MCF 10A (cell line): ENCODE measurements at regions of chr7 and their contacts with region 1.

Region 1: DNA sequence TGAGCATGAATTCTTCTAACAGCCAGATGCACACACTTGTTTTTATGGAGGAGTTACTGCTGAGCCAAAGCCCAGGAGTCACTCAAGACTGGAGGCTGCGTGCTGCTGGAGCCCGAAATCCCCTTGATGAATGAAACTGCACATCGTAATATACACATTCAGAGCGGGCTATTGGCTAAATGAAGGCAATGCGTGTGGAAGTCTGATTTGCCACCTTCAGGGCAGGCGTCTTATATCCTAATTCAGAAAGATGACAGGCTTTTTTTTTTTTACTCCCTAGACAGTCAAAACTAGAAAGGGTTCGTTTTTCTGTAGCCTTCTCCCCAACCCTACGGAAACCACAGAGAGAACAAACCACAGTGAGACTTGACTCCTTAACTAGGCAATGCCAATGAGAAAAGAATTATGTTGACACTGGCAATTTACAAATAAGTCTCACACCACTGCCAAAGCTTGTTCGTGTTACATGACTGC is 227.2 kb upstream of the KLF14 start:
- DNase-seq: peak; percentile 91
- H3K4me3 Mint-ChIP-seq: peak overlapping the region; percentile 76
- H3K27ac Mint-ChIP-seq: peak overlapping the region; percentile 94
- H3K4me1 Mint-ChIP-seq: peaks cover 48% of the 10 kb centered on the region
- H3K27me3 Mint-ChIP-seq: no peaks in the 10 kb centered on the region
- CTCF ChIP-seq: no peak

Region 2: DNA sequence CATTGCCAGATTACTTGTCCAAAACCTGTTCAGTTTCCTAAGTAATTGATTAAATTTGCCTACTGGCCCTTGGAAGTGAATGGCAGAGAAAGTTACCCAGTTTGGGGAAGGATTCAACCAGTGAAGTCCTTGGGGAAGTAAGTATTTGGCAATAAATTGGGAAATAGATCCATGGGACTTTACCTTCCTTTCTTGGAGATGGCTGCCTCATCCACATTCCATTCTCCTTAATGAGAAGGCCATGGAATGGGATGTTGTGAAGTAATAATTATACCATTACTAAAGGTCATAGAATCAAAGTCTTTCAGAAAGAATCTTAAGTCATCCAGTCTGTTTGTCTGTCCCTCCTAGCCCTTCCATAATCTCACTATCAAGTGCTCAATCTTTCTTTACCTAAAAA is 288.1 kb before region 1 on chr7:
- CTCF ChIA-PET with region 1: no interaction called
- POLR2A ChIA-PET with region 1: no interaction called
- intact Hi-C with region 1: no loop called
- DNase-seq: peak; percentile 10
- H3K4me3 Mint-ChIP-seq: no peak overlapping the region
- H3K27ac Mint-ChIP-seq: no peak overlapping the region
- H3K4me1 Mint-ChIP-seq: peaks cover 9% of the 10 kb centered on the region
- H3K27me3 Mint-ChIP-seq: no peaks in the 10 kb centered on the region
- CTCF ChIP-seq: no peak

Region 3: GRCh38 chr7:130891254-130892094 is 69.7 kb before region 1 on chr7:
- CTCF ChIA-PET with region 1: interaction called, 51 read pairs
- POLR2A ChIA-PET with region 1: interaction called, 93 read pairs
- intact Hi-C with region 1: no loop called
- DNase-seq: peak; percentile 97
- H3K4me3 Mint-ChIP-seq: peak overlapping the region; percentile 69
- H3K27ac Mint-ChIP-seq: peak overlapping the region; percentile 95
- H3K4me1 Mint-ChIP-seq: peaks cover 78% of the 10 kb centered on the region
- H3K27me3 Mint-ChIP-seq: no peaks in the 10 kb centered on the region
- CTCF ChIP-seq: no peak

Region 4: DNA sequence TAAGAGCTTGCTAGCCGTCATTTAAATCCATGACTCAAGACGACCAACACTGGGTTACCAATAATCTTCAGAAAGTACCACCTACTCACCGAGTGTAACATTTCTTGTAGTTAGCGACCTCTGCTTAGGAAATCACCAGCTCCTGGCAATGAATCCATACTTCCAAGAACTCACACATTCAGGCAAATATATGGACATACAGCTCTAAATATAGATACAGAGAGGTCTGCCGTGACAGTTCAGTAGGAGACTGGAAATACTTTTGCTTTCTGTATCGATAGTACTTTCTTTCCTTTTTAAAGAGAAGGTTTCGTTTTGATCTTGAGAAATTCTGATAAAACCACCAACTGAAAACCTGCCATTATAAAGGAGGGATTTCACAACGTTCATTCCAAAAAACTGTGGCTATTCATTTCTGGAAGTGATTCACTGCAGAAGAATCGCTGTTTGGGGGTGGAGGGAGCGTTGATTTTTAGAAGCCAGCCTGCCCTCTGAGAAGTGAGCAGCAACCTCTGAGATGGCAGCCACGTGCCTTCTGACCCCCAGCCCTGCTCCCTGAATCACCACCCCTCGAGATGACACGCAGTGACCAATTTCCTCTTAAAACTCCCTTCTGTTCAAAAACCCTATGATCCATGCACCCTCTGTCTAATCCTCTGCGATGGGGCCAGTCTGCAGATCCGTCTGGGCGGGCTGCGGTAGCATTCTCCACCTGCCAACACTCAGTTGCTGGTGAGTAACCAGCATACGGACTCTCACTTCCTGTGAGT is 48.1 kb before region 1 on chr7:
- CTCF ChIA-PET with region 1: interaction called, 8 read pairs
- POLR2A ChIA-PET with region 1: interaction called, 8 read pairs
- intact Hi-C with region 1: loop called (anchors 1 kb)
- DNase-seq: peak; percentile 95
- H3K4me3 Mint-ChIP-seq: peak overlapping the region; percentile 86
- H3K27ac Mint-ChIP-seq: peak overlapping the region; percentile 89
- H3K4me1 Mint-ChIP-seq: peaks cover 68% of the 10 kb centered on the region
- H3K27me3 Mint-ChIP-seq: no peaks in the 10 kb centered on the region
- CTCF ChIP-seq: no peak

Region 5: GRCh38 chr7:130935564-130936157 is 25.5 kb before region 1 on chr7:
- CTCF ChIA-PET with region 1: interaction called, 5 read pairs
- POLR2A ChIA-PET with region 1: interaction called, 52 read pairs
- intact Hi-C with region 1: no loop called
- DNase-seq: no peak
- H3K4me3 Mint-ChIP-seq: no peak overlapping the region
- H3K27ac Mint-ChIP-seq: peak overlapping the region; percentile 35
- H3K4me1 Mint-ChIP-seq: peaks cover 49% of the 10 kb centered on the region
- H3K27me3 Mint-ChIP-seq: no peaks in the 10 kb centered on the region
- CTCF ChIP-seq: no peak

Region 6: GRCh38 chr7:130982160-130982638 is 21.0 kb after region 1 on chr7:
- CTCF ChIA-PET with region 1: interaction called, 28 read pairs
- POLR2A ChIA-PET with region 1: interaction called, 11 read pairs
- intact Hi-C with region 1: no loop called
- DNase-seq: peak; percentile 69
- H3K4me3 Mint-ChIP-seq: no peak overlapping the region
- H3K27ac Mint-ChIP-seq: no peak overlapping the region
- H3K4me1 Mint-ChIP-seq: peaks cover 21% of the 10 kb centered on the region
- H3K27me3 Mint-ChIP-seq: no peaks in the 10 kb centered on the region
- CTCF ChIP-seq: peak; percentile 68

Region 7: DNA sequence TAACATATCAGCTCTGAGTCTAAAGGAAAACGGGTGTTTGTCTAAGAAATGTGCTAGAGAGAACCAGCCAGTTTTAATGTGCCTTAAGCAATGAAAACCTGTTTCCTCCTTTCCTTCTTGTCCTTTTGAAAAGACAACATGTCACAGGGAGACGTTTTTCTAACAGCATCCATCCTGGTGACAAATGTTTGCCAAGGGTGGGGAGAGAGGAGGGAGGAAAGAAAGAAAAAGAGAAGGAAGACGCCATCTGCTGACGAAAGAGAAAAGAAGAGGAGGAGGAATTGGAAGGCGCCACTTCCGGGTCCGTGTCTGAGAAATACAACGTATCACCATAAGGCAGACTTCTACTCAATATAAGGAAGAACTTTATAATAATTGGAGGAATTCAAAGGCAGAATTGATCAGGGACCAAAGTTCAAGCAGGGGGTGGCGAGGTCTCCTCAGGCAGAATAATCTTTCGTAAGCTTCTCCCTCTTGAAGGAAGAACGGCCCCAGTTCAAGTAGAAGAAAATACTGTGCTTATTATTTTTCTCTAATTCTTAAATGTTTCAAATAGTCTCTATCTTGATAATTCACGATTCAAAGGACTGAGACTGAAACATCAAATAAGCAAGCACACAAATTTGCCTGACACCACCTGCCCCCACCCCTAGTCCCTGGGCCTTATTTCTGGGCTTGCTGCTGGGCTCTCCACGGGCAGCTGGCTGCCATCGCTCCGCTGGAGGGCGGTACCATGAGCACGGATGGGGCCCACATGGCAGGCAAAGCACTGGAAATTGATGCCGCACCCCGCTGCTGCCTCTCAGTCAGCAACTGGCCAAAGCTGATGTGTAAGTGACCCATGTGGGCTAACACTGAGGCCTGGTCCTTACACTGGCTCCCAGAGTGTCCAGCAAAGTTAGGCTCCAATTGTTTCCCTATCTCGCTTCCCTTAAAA is 46.5 kb after region 1 on chr7:
- CTCF ChIA-PET with region 1: interaction called, 11 read pairs
- POLR2A ChIA-PET with region 1: interaction called, 15 read pairs
- intact Hi-C with region 1: loop called (anchors 2 kb)
- DNase-seq: peak; percentile 87
- H3K4me3 Mint-ChIP-seq: peak overlapping the region; percentile 15
- H3K27ac Mint-ChIP-seq: peak overlapping the region; percentile 84
- H3K4me1 Mint-ChIP-seq: peaks cover 46% of the 10 kb centered on the region
- H3K27me3 Mint-ChIP-seq: no peaks in the 10 kb centered on the region
- CTCF ChIP-seq: peak; percentile 58

Region 8: GRCh38 chr7:131164025-131164899 is 203.1 kb after region 1 on chr7:
- CTCF ChIA-PET with region 1: no interaction called
- POLR2A ChIA-PET with region 1: no interaction called
- intact Hi-C with region 1: no loop called
- DNase-seq: peak; percentile 92
- H3K4me3 Mint-ChIP-seq: peak overlapping the region; percentile 65
- H3K27ac Mint-ChIP-seq: peak overlapping the region; percentile 97
- H3K4me1 Mint-ChIP-seq: peaks cover 28% of the 10 kb centered on the region
- H3K27me3 Mint-ChIP-seq: no peaks in the 10 kb centered on the region
- CTCF ChIP-seq: no peak

Region 9: DNA sequence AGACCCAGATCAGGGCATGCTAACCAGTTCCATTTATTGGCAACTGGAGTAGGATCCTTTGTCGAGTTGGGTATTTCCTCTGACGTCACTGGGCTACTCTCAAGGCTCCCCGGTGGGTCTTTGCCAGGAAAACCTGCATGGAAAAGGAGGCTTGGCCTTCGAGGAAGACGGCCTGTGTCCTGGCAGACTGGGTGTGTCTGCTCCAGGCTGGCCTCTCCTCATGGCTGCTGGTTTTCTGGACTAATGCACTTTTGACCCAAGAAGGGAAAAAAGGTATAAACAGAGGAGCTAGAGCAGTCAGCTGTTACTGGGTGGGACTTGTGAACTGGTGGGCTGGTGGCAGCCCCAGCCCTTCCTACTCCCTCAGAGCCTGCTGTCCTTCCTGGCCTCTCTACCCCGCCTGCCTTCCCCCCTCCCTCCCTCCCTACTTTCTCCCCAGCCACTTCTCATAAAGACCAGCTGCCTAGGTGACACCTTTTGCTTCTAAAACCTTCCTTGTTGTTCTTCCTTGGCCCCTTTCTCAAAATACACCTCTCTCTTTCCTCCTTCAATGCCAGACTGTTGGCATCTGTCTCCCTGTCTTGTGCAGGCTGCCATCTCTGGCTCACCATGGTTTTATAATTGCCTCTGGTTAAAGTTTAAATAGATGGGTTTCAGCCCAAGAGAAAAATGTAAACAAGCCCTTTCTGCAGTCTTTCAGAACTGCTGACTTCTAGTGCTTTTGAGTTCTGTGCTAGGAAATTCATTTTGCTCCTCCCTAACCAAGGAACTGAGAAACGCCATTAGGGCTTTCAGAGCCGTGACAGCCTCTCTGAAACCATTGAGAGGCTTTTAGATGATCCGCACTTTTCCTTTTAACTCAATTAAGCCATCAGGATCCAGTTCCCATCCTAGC is 264.7 kb after region 1 on chr7:
- CTCF ChIA-PET with region 1: no interaction called
- POLR2A ChIA-PET with region 1: no interaction called
- intact Hi-C with region 1: no loop called
- DNase-seq: peak; percentile 84
- H3K4me3 Mint-ChIP-seq: no peak overlapping the region
- H3K27ac Mint-ChIP-seq: peak overlapping the region; percentile 37
- H3K4me1 Mint-ChIP-seq: peaks cover 9% of the 10 kb centered on the region
- H3K27me3 Mint-ChIP-seq: no peaks in the 10 kb centered on the region
- CTCF ChIP-seq: no peak